Naive thymus-derived CD4-positive, alpha-beta T cell (primary cell): ENCODE measurements at regions of chr5 and their contacts with region 1.

Region 1: DNA sequence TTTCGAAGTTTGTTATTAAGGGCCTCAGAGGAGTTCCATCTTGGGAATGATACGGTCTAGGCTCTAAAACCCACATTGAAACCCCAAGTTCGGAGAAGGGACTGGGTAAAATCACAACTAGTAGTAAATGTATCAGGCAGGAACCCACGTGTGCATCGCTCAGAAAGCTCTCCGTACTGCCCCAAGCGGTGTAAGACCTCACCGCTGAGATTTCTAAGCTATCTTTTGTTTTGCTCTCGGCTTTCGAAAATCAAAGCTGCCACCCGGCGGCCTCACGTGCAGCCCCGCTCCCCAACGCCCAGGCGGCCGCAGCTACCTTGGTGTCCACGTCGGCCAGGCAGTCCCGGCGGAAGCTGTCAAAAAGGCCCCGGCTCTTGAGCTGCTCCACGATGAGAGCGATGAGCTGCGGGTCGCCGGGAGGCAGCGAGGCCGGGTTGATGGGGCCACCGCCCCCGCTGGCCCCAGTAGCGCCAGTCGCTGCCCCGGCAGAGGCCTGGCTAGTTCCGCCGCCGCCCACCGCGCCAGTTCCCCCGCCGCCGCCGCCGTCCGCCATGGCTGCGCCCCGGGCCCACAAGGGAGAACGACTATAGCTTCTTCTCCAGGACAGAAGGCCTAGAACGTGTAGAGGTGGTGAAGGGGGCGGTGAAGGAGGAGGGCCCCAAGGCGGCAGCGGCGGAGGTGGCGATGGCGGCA is 420 bp downstream of the BOD1 start:
- DNase-seq: peak; percentile 47 to 78 (median 73)
- ATAC-seq: peak; percentile 73
- H3K4me3 ChIP-seq: peak overlapping the region; percentile 71
- H3K4me3 Mint-ChIP-seq: peak overlapping the region; percentile 85 to 97 (median 92)
- H3K27ac ChIP-seq: peak overlapping the region; percentile 99
- H3K27ac Mint-ChIP-seq: peak overlapping the region; percentile 79 to 98 (median 93)
- H3K4me1 ChIP-seq: peaks cover 21 to 24% of the 10 kb centered on the region in 2 donors
- H3K4me1 Mint-ChIP-seq: peaks cover 28 to 60% (median 51%) of the 10 kb centered on the region in 7 donors
- H3K27me3 ChIP-seq: no peaks in the 10 kb centered on the region
- H3K27me3 Mint-ChIP-seq: no peaks in the 10 kb centered on the region

Region 2: GRCh38 chr5:172454358-172455086 is 1161.5 kb before region 1 on chr5 and contains the start of gene SH3PXD2B:
- CTCF ChIA-PET with region 1: no interaction called
- POLR2A ChIA-PET with region 1: no interaction called
- intact Hi-C with region 1: loop called in 1 of 2 experiments (anchors 5 kb)
- DNase-seq: peak in 7 of 9 donors; percentile 11 to 52 (median 47)
- ATAC-seq: peak; percentile 73
- H3K4me3 ChIP-seq: peak within 1 kb of the TSS; percentile 36
- H3K4me3 Mint-ChIP-seq: peak within 1 kb of the TSS; percentile 82 to 93 (median 86)
- H3K27ac ChIP-seq: no peak within 1 kb of the TSS
- H3K27ac Mint-ChIP-seq: peak within 1 kb of the TSS in 7 of 9 donors; percentile 39 to 66 (median 52)
- H3K4me1 ChIP-seq: no peaks in the 10 kb centered on the region
- H3K4me1 Mint-ChIP-seq: peaks cover 8 to 17% (median 13%) of the 10 kb centered on the region in 7 donors
- H3K27me3 ChIP-seq: peaks cover 0 to 4% of the 10 kb centered on the region in 2 donors
- H3K27me3 Mint-ChIP-seq: peaks cover 12 to 59% (median 39%) of the 10 kb centered on the region in 5 donors
- total RNA-seq, gene SH3PXD2B: 0.15 to 1.1 (median 0.34) TPM

Region 3: DNA sequence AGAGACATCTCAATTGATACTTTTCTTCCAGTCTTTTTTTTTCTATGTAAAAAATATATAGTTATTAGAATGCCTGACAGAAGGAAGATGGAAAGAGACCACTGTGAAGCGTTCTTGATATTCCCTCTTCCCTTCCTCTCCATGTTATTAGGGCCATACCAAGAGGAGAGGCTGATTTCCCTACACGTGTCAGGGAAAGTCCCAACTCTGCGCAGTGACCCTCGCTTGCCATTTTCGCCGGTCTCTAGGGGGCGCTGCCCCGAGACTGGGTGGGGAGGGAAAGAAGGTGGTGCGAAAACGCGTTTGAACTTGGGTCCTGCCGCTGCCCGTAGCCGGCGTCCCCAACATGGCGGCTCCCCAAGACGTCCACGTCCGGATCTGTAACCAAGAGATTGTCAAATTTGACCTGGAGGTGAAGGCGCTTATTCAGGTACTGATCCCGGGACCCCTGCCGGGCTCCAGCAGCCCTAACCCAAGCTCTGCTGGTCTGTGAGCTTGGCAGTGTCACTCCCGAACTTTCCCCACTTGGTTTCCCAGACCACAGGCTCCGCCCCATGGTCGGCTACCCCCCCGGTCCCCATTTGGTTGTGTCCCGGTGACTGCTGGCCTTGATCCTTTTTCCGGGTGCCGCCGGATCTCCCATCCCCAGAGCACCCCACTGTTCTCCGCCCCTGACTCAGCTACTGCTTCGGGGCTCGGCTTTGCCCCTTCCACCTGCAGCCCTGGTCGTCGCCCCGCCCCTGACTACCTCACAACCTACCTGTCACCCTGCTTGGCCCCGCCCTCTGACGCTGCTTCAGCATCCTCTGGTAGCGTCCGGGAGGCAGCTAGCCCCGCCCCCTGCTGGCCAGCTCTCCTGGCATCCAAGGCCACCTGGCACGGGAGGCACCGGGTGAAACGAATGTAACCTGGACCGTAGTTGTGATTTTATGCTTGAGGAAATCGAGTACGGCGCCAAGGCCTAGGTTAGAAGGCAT is 471.5 kb before region 1 on chr5 and contains the start of gene BNIP1:
- CTCF ChIA-PET with region 1: no interaction called
- POLR2A ChIA-PET with region 1: no interaction called
- intact Hi-C with region 1: loop called in 1 of 2 experiments (anchors 1 kb)
- DNase-seq: peak; percentile 92 to 99 (median 96)
- ATAC-seq: peak; percentile 94
- H3K4me3 ChIP-seq: peak within 1 kb of the TSS; percentile 100
- H3K4me3 Mint-ChIP-seq: peak within 1 kb of the TSS; percentile 93 to 99 (median 97)
- H3K27ac ChIP-seq: peak within 1 kb of the TSS; percentile 98
- H3K27ac Mint-ChIP-seq: peak within 1 kb of the TSS; percentile 96 to 99 (median 98)
- H3K4me1 ChIP-seq: no peaks in the 10 kb centered on the region
- H3K4me1 Mint-ChIP-seq: peaks cover 5 to 21% (median 16%) of the 10 kb centered on the region in 7 donors
- H3K27me3 ChIP-seq: no peaks in the 10 kb centered on the region
- H3K27me3 Mint-ChIP-seq: no peaks in the 10 kb centered on the region
- total RNA-seq, gene BNIP1: 5.5 to 23.2 (median 15.3) TPM

Region 4: GRCh38 chr5:173331956-173332479 is 284.0 kb before region 1 on chr5:
- CTCF ChIA-PET with region 1: no interaction called
- POLR2A ChIA-PET with region 1: no interaction called
- intact Hi-C with region 1: loop called in 1 of 2 experiments (anchors 1 kb)
- DNase-seq: peak; percentile 29 to 92 (median 59)
- ATAC-seq: peak; percentile 96
- H3K4me3 ChIP-seq: no peak overlapping the region
- H3K4me3 Mint-ChIP-seq: peak overlapping the region in 2 of 10 donors; percentile 10 to 48
- H3K27ac ChIP-seq: no peak overlapping the region
- H3K27ac Mint-ChIP-seq: peak overlapping the region in 1 of 9 donors; percentile 62
- H3K4me1 ChIP-seq: no peaks in the 10 kb centered on the region
- H3K4me1 Mint-ChIP-seq: peaks cover 10 to 33% (median 17%) of the 10 kb centered on the region in 7 donors
- H3K27me3 ChIP-seq: peaks cover 0 to 3% of the 10 kb centered on the region in 2 donors
- H3K27me3 Mint-ChIP-seq: peaks cover 7 to 71% (median 68%) of the 10 kb centered on the region in 5 donors

Region 5: GRCh38 chr5:173887610-173888472 is 271.8 kb after region 1 on chr5 and contains the start of gene CPEB4:
- CTCF ChIA-PET with region 1: interaction called, 6 read pairs
- POLR2A ChIA-PET with region 1: interaction called, 23 read pairs
- intact Hi-C with region 1: loop called (anchors 1 kb)
- DNase-seq: peak; percentile 89 to 98 (median 97)
- ATAC-seq: peak; percentile 97
- H3K4me3 ChIP-seq: peak within 1 kb of the TSS; percentile 70
- H3K4me3 Mint-ChIP-seq: peak within 1 kb of the TSS; percentile 91 to 99 (median 96)
- H3K27ac ChIP-seq: peak within 1 kb of the TSS; percentile 82
- H3K27ac Mint-ChIP-seq: peak within 1 kb of the TSS; percentile 94 to 100 (median 98)
- H3K4me1 ChIP-seq: peaks cover 49 to 60% of the 10 kb centered on the region in 2 donors
- H3K4me1 Mint-ChIP-seq: peaks cover 61 to 88% (median 78%) of the 10 kb centered on the region in 7 donors
- H3K27me3 ChIP-seq: no peaks in the 10 kb centered on the region
- H3K27me3 Mint-ChIP-seq: no peaks in the 10 kb centered on the region
- total RNA-seq, gene CPEB4: 12.6 to 40.4 (median 17.5) TPM

Region 6: GRCh38 chr5:173925448-173926071 is 309.5 kb after region 1 on chr5:
- CTCF ChIA-PET with region 1: interaction called, 10 read pairs
- POLR2A ChIA-PET with region 1: interaction called, 8 read pairs
- intact Hi-C with region 1: loop called in 1 of 2 experiments (anchors 1 kb)
- DNase-seq: peak in 8 of 9 donors; percentile 11 to 48 (median 28)
- ATAC-seq: peak; percentile 54
- H3K4me3 ChIP-seq: no peak overlapping the region
- H3K4me3 Mint-ChIP-seq: no peak overlapping the region
- H3K27ac ChIP-seq: no peak overlapping the region
- H3K27ac Mint-ChIP-seq: no peak overlapping the region
- H3K4me1 ChIP-seq: no peaks in the 10 kb centered on the region
- H3K4me1 Mint-ChIP-seq: peaks cover 9 to 40% (median 31%) of the 10 kb centered on the region in 7 donors
- H3K27me3 ChIP-seq: no peaks in the 10 kb centered on the region
- H3K27me3 Mint-ChIP-seq: no peaks in the 10 kb centered on the region

Region 7: GRCh38 chr5:175478384-175479124 is 1862.5 kb after region 1 on chr5 and contains the start of gene SFXN1:
- CTCF ChIA-PET with region 1: no interaction called
- POLR2A ChIA-PET with region 1: no interaction called
- intact Hi-C with region 1: loop called in 1 of 2 experiments (anchors 5 kb)
- DNase-seq: peak; percentile 56 to 90 (median 76)
- ATAC-seq: peak; percentile 82
- H3K4me3 ChIP-seq: peak within 1 kb of the TSS; percentile 93
- H3K4me3 Mint-ChIP-seq: peak within 1 kb of the TSS; percentile 95 to 98 (median 98)
- H3K27ac ChIP-seq: peak within 1 kb of the TSS; percentile 72
- H3K27ac Mint-ChIP-seq: peak within 1 kb of the TSS; percentile 71 to 98 (median 95)
- H3K4me1 ChIP-seq: peaks cover 29 to 34% of the 10 kb centered on the region in 2 donors
- H3K4me1 Mint-ChIP-seq: peaks cover 33 to 64% (median 54%) of the 10 kb centered on the region in 7 donors
- H3K27me3 ChIP-seq: no peaks in the 10 kb centered on the region
- H3K27me3 Mint-ChIP-seq: peaks cover 0 to 19% (median 4%) of the 10 kb centered on the region in 5 donors
- total RNA-seq, gene SFXN1: 58.7 to 177 (median 88.9) TPM